Natural killer cell (primary cell): ENCODE measurements at regions of chr12 and their contacts with region 1.

Region 1: DNA sequence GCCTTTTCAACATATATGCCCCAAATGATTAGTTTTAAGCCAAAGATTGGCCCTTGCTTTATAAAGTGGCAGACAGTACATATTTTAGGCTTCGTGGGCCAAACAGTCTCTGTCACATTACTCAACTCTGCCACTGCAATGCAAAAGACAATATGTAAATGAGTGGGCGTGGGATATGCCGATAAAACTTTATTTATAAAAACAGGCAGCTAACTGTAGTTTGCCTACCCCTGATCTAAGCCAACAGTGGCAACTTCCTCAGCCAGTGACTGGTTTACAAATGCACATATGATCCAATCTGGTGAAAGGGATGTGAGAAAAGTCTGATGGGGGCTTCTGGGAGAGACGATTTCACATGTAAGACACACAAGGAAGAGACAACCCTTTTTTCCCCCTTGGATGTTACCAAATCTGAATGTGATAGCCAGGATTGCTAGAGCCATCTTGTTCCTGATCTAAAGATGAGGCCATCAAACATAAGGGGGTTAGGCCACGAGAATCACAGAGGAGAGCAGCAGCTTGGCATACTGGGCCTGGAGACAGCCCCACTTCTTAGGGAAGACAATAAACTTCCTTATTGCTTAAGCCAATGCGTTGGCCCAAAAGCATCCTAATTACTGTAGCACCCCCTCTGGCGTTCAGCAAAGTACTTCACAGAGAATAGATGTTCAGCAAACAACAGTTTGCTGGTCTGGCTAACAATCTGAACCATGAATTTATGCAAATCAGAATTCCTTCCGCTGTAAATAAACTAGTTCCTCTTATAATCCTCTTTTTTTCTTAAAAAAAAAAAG is 75.2 kb upstream of the TMCC3 start:
- DNase-seq: peak in 1 of 2 donors; percentile 50
- ATAC-seq: peak; percentile 43 to 71 (median 58)
- H3K4me3 ChIP-seq: no peak overlapping the region
- H3K4me3 Mint-ChIP-seq: no peak overlapping the region
- H3K27ac ChIP-seq: no peak overlapping the region
- H3K27ac Mint-ChIP-seq: no peak overlapping the region
- H3K4me1 ChIP-seq: no peaks in the 10 kb centered on the region
- H3K4me1 Mint-ChIP-seq: peaks cover 0 to 13% of the 10 kb centered on the region in 2 donors
- H3K27me3 ChIP-seq: no peaks in the 10 kb centered on the region
- H3K27me3 Mint-ChIP-seq: peaks cover 0 to 9% of the 10 kb centered on the region in 2 donors
- CTCF ChIP-seq: peak; percentile 34

Region 2: DNA sequence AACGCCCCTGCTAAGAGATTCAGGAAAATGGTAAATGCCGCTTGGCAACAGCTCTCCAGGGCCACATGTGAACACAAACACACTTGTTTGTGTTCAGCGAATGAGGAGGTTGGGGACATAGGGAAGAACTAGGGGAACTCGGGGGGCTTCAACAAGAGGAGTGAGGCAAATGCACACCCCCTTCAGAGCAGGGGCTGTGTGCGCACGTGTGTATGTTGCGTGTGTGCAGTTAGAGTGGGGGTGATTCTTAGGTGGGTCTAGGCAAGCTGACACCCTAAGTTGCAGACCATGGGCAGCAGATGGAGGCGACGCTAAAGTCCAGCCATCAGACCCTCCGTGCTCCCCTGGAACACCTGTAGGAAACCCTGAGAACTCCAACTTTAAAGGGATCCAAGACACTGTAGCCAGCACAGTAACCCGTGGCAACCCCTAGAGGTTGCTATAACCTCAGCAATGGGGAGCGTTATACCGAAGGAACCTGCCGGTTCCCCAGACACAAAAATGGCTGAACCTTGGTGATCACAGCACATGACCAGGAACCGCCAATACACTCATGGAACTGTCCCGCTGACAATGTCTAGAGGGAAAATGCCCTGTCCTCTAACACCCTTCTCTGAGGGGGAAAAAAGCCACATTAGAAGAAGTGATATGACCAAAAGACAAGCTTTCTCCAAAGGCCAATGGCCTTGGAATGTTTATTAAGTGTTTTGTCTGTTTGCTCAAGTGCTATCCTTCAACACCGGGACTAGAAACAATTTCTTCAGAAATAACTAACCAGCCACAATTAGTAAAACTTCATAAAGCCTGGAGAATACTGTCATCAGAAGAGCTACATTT is 179.4 kb before region 1 on chr12:
- intact Hi-C with region 1: loop called (anchors 1 kb)
- DNase-seq: peak in 1 of 2 donors; percentile 34
- ATAC-seq: peak; percentile 75 to 91 (median 88)
- H3K4me3 ChIP-seq: no peak overlapping the region
- H3K4me3 Mint-ChIP-seq: no peak overlapping the region
- H3K27ac ChIP-seq: no peak overlapping the region
- H3K27ac Mint-ChIP-seq: no peak overlapping the region
- H3K4me1 ChIP-seq: no peaks in the 10 kb centered on the region
- H3K4me1 Mint-ChIP-seq: peaks cover 0 to 5% of the 10 kb centered on the region in 2 donors
- H3K27me3 ChIP-seq: no peaks in the 10 kb centered on the region
- H3K27me3 Mint-ChIP-seq: peaks cover 0 to 3% of the 10 kb centered on the region in 2 donors
- CTCF ChIP-seq: peak; percentile 59

Region 3: DNA sequence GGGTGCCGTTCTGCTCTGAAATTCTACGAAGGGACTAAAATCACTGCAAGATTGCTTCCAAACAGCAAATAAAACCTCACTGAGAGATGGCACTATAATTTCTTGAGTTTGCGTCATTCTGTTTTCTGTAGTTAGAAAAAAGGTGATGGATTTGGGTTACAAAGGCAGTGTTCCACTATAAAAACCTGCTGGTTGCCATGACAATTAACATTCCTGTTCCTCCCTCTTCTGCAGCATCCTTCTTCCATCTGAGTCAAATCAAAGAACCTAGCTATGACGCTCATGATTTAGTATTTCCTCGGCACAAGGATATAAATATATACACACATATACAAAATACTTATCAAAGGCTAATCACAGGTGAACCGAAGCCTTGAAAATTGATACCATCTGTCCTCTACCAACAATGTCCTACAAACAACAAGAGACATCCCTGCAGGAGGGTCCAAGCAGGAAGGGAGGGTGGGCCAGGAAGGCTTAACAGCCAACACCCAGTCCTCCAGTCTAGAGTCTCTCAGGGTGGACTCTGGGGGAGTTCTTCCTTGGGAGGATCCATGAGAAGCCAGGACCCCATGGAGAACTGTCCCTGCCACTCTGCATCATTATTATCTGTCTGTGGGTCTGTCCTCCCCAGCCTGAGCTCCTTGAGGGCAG is 96.6 kb before region 1 on chr12:
- intact Hi-C with region 1: no loop called
- DNase-seq: no peak
- ATAC-seq: no peak
- H3K4me3 ChIP-seq: no peak overlapping the region
- H3K4me3 Mint-ChIP-seq: no peak overlapping the region
- H3K27ac ChIP-seq: no peak overlapping the region
- H3K27ac Mint-ChIP-seq: no peak overlapping the region
- H3K4me1 ChIP-seq: no peaks in the 10 kb centered on the region
- H3K4me1 Mint-ChIP-seq: peaks cover 23 to 46% of the 10 kb centered on the region in 2 donors
- H3K27me3 ChIP-seq: no peaks in the 10 kb centered on the region
- H3K27me3 Mint-ChIP-seq: no peaks in the 10 kb centered on the region
- CTCF ChIP-seq: no peak

Region 4: DNA sequence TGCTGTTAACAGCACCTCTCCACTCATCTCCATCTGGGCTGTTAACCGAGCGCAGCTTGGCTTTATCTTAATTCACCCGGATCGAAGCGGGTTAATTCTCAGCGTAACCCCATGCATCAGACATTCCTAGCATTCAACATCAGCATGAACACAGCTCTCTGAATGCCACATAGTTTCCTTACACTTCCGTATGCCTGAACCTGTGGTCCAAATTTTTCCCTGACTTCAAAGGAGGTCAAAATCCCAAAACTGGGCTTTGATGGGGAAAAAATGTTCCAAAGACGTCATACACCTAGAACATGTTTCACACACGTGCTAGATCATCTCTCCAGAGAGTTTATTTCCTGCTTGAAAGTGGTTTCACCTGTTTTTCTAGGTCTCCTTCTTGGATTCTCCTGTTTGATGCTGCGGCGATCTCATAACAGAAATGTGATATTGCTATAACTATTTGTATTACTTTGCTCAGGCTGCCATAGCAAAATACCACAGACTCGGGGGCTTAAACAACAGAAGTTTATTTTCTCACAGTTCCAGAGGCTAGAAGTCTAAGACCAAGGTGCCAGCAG is 55.6 kb before region 1 on chr12:
- intact Hi-C with region 1: no loop called
- DNase-seq: no peak
- ATAC-seq: no peak
- H3K4me3 ChIP-seq: no peak overlapping the region
- H3K4me3 Mint-ChIP-seq: no peak overlapping the region
- H3K27ac ChIP-seq: no peak overlapping the region
- H3K27ac Mint-ChIP-seq: peak overlapping the region in 1 of 2 donors; percentile 24
- H3K4me1 ChIP-seq: peaks cover 4% of the 10 kb centered on the region
- H3K4me1 Mint-ChIP-seq: peaks cover 12 to 16% of the 10 kb centered on the region in 2 donors
- H3K27me3 ChIP-seq: no peaks in the 10 kb centered on the region
- H3K27me3 Mint-ChIP-seq: no peaks in the 10 kb centered on the region
- CTCF ChIP-seq: no peak